ENCODE measurements at regions of chr2 and their contacts with region 1.

Region 1: GRCh38 chr2:1591978-1592907 is 152.1 kb downstream of the PXDN start:
- DNase-seq: peak; percentile 82 to 94
- H3K4me3 ChIP-seq: no peak overlapping the region
- H3K27ac ChIP-seq: peak overlapping the region; percentile 18 to 47
- H3K4me1 ChIP-seq: peaks cover 0 to 13% (median 10%) of the 10 kb centered on the region in 4 donors
- H3K27me3 ChIP-seq: peaks cover 0 to 4% of the 10 kb centered on the region in 2 donors
- CTCF ChIP-seq: peak; percentile 92 to 95

Region 2: GRCh38 chr2:1641523-1641922 is 49.3 kb after region 1 on chr2:
- intact Hi-C with region 1: loop called (anchors 1 kb)
- DNase-seq: no peak
- H3K4me3 ChIP-seq: no peak overlapping the region
- H3K27ac ChIP-seq: no peak overlapping the region
- H3K4me1 ChIP-seq: peaks cover 0 to 17% (median 2%) of the 10 kb centered on the region in 4 donors
- H3K27me3 ChIP-seq: no peaks in the 10 kb centered on the region
- CTCF ChIP-seq: no peak

Region 3: DNA sequence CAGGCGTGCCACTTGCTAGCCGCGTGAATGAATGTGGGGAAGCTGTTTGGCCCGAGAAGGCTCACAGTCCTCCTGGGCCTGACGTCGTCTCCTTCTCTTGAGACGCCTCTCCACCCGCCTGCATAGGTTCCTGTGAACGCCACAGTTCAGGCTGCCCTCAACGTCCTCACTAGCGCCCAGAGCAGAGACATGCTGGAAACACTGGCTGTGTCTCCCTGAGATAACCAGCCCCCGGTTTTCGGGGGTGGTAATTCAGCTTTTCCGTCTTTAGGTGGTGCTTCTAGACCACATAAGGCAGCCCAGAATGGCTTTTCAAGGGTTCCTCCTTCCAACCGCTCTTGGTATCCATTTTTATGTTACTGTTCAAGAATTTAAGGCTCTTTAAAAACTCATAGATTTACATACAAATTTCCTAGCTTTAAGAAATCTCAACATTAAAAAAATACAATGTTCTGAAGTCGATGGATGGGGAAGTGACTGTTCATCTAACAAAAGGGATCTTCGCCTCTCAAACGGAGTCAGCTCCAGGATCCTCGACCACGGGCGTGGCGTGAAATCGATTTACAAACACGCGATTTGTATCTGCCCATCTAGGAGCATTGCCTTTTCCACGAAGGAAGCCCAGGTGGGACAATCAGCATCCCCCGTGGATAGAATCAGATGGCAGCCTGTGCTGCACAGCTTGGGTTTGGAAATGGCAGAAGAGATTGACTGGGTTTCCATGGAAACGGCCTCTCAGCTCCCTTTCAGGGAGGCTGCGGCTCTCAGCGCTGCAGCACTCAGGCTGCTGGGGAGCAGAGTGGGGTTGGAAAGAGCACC is 262.7 kb after region 1 on chr2:
- intact Hi-C with region 1: no loop called
- DNase-seq: no peak
- H3K4me3 ChIP-seq: peak overlapping the region in 1 of 2 donors; percentile 6
- H3K27ac ChIP-seq: no peak overlapping the region
- H3K4me1 ChIP-seq: peaks cover 0 to 9% (median 0%) of the 10 kb centered on the region in 4 donors
- H3K27me3 ChIP-seq: peaks cover 0 to 23% of the 10 kb centered on the region in 2 donors
- CTCF ChIP-seq: peak; percentile 53 to 71